ENCODE measurements at regions of chr7 and their contacts with region 1.

Region 1: DNA sequence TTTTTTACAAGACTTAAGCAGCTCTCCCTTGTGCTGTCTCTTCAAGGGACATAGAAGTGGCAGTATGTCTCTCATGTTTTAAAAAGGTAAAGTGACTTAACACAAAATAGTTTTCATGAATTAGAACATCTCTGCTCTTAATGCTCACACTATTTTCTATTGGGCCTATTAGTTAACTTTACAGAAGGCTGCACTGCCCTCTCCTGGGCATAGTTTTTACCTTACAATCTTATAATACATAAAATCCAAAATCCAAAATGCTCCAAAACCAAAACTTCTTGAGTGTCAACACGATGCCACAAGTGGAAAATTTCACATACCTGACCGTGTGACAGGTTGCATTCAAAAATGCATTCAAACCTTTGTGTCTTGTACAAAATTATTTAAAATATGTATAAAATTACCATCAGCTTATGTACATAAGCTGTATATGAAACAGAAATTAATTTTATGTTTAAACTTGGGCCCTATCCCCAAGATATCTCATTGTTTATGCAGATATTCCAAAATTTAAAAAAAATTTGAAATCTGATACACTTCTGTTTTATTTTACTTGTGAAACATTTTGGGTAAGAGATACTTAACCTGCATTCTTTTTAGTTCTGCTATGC is 25.8 kb downstream of the TES start:
- DNase-seq: peak in 1 of 2 donors; percentile 65
- ATAC-seq: peak; percentile 39

Region 2: DNA sequence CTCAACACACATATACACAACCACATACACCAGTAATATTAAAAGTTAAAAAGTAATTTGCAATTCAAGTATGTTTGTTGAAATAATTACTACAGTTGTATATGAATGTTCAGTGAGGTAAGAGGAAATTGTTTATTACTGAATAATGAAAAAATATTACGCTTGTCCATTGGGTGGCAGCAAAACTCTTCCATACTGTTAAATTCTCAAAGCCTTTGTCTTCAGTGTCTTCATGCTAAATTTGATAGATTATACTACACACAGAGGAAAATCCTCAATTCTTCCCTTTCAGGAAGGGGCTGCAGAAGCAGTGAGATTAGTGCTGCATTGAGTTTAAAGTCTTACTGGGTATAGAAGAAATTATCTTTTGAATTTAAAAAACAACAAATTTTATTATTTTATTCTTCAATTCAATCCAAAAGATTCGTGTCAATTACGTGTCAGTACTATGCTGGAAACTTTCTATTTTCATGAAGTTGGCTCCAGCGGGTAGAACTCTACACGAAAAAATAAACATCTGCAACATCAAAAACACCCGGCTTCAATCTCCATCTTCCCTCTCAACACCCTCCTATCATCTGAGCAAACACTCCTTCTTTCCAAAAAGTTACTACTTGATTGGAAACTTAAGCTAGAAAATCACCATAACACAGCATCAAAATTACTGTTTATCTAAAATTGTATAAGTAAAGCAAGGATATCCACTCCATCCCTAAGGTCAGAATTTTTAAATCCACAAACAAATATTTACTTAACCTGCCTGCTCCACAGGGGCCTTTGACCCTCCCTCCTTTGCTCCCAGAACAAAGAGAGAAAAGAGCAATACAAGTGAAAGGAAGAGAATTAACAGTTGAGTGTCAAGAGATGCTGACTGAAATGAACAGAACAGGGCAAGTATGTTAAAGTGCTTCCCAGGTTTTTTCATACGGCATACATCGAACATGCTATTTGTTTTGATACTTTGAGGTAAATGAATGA is 62.8 kb before region 1 on chr7:
- intact Hi-C with region 1: loop called in 1 of 2 experiments (anchors 10 kb)
- DNase-seq: no peak
- ATAC-seq: peak; percentile 67

Region 3: GRCh38 chr7:116180302-116180701 is 55.8 kb before region 1 on chr7:
- intact Hi-C with region 1: loop called (anchors 2 to 10 kb)
- DNase-seq: no peak
- ATAC-seq: peak; percentile 79

Region 4: GRCh38 chr7:116426428-116427156 is 190.5 kb after region 1 on chr7:
- intact Hi-C with region 1: no loop called
- DNase-seq: peak; percentile 17 to 56
- ATAC-seq: peak; percentile 97

Region 5: GRCh38 chr7:116671681-116672595 is 435.8 kb after region 1 on chr7 and contains the start of gene MET:
- intact Hi-C with region 1: no loop called
- DNase-seq: peak; percentile 85 to 88
- ATAC-seq: peak; percentile 91
- total RNA-seq, gene MET: 41.2 TPM

Region 6: GRCh38 chr7:117047496-117047895 is 811.4 kb after region 1 on chr7:
- intact Hi-C with region 1: no loop called
- DNase-seq: no peak
- ATAC-seq: no peak

Measured in left colon (tissue), 2 donors.